ENCODE measurements at regions of chr5 and their contacts with region 1.

Region 1: DNA sequence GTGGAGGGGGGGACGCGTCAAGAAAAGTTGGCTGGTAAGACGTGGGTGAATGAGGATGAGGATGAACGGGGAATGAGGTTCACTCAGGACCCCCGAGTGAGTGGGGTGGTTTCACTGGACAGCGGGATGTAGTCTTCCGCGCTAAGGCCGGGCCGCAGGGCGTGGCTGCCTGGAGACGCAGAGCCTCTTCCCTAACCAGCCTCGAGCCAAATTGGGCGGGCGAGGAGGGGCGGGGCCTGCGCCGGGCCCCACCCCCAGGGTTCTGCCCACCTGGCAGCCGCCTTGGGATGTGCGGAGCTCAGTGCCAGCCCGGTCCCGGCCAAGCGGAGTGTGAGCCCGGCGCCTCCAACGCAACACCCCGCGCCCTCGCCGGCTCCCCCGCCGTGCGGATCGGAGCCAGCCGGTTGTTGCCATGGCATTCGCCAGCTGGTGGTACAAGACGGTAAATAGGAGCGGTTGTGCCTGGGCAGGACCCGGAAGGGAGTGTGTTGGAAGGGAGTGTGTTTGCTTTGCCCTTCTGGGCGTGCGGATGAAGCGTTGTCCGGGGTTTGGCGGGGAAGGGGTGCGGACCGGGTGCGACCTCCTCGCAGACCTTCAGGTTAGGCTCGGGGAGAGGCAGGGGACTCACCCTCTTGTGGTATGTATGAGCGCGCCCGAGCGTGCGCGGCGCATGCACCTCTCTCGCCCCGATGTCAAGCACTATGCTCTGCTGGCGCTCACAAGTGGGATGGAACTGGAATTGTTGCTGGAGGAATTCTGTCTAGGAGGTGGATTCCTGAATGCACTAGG is 743 bp downstream of the CAST start:
- DNase-seq: peak; percentile 85 to 97
- H3K4me3 ChIP-seq: peak overlapping the region; percentile 81 to 87
- H3K27ac ChIP-seq: peak overlapping the region; percentile 95
- H3K4me1 ChIP-seq: peaks cover 0 to 13% of the 10 kb centered on the region in 2 donors
- H3K27me3 ChIP-seq: no peaks in the 10 kb centered on the region
- CTCF ChIP-seq: peak in 1 of 3 experiments; percentile 9

Region 2: DNA sequence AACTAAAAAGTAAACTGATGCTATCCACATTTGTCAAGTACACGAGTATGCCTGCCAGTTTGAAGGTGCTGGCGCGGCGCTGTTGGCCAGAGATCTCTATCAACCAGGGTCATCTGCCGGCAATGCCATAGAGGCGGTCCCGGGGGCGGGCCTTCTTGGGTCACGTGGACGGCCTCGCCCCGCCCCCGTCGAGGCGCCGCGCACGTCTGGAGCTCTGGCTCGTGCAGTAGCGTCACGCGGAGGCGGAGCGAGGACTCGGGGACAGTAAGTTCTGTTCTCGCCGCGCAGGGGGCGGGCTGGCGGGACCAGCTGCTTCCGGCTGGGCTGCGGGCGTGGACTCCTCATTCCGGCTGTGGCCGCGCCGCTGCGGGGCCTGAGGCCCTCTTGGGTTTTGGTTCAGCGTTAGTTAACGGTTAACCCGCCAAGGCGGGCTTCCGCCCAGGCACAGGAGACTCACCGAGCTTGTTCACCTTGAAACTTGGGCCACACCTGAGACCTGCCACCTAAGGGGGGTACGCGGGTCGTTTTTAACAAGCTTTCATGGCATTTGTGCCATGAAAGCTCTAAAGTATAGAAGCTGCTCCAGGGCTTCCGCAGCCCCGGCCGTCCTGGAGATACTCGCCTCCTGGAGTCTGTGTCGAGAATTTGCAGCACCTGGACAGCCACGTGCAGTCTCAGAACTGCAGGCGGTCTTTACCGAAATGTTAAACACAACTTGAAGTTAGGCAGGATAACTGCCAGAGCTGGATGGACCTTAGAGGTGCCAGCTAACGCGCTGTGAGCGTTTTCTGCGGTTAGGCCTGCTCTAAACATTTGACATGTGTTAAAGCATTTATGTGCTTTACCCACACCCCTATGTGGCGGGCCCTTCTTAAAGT is 1016.1 kb before region 1 on chr5 and contains the start of gene RFESD:
- intact Hi-C with region 1: loop called (anchors 5 kb)
- DNase-seq: peak; percentile 97 to 100
- H3K4me3 ChIP-seq: peak within 1 kb of the TSS; percentile 59 to 77
- H3K27ac ChIP-seq: peak within 1 kb of the TSS; percentile 83 to 91
- H3K4me1 ChIP-seq: peaks cover 0 to 4% of the 10 kb centered on the region in 2 donors
- H3K27me3 ChIP-seq: no peaks in the 10 kb centered on the region
- CTCF ChIP-seq: peak in 1 of 3 experiments; percentile 22
- total RNA-seq, gene RFESD: not detected

Region 3: DNA sequence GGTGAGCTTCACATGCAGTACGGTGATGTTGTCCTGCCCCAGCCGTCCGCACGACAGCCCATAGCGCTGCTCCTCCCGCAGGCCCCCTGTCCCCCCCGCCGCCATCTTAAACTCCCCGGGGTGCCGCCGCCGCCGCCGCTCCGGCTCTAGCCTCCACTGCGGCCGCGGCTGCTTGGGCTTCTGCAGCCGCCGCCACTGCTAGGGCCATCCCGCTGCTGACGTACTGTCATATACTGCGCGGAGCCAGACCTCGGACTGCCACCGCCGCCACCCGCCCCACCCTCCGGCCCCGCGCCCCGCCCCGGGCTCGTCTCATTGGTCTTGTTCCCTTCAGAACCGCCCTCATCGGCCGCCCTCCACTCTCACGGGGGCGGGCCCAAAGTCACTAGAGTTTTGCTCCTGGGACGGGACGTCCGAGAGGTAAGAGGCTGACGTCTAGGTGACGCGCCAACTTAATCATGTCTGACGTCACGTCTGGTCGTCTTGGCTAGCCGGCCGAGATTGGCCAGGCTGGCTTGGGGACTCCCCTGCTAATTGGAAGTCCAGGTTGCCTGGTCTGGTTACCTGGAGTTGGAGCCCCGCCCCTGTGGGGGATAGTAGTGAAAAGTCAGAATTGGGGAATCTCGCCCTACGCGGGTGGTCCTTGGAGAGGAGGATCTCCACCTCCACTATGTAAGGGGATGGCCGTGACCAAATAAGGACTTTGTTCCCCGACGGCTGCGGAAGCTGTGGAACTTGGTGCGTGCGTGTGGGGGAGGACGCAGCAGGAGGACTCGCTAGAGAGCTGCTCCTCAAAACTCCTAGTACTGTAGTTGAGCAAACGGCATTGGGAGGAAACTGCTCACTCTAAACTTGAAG is 701.1 kb before region 1 on chr5 and contains the start of gene ELL2:
- intact Hi-C with region 1: loop called (anchors 5 kb)
- DNase-seq: peak; percentile 100
- H3K4me3 ChIP-seq: peak within 1 kb of the TSS; percentile 92 to 98
- H3K27ac ChIP-seq: peak within 1 kb of the TSS; percentile 99
- H3K4me1 ChIP-seq: peaks cover 0 to 14% of the 10 kb centered on the region in 2 donors
- H3K27me3 ChIP-seq: no peaks in the 10 kb centered on the region
- CTCF ChIP-seq: no peak
- total RNA-seq, gene ELL2: 26.0 TPM

Region 4: GRCh38 chr5:96614110-96614691 is 48.7 kb before region 1 on chr5:
- intact Hi-C with region 1: loop called (anchors 1 kb)
- DNase-seq: peak in 1 of 2 donors; percentile 77
- H3K4me3 ChIP-seq: peak overlapping the region in 1 of 2 donors; percentile 28
- H3K27ac ChIP-seq: peak overlapping the region; percentile 76 to 80
- H3K4me1 ChIP-seq: peaks cover 8 to 15% of the 10 kb centered on the region in 2 donors
- H3K27me3 ChIP-seq: no peaks in the 10 kb centered on the region
- CTCF ChIP-seq: peak; percentile 40 to 59 (median 52)

Region 5: GRCh38 chr5:96807075-96807654 is 144.2 kb after region 1 on chr5:
- intact Hi-C with region 1: loop called (anchors 2 kb)
- DNase-seq: peak in 1 of 2 donors; percentile 84
- H3K4me3 ChIP-seq: peak overlapping the region; percentile 95 to 99
- H3K27ac ChIP-seq: peak overlapping the region; percentile 100
- H3K4me1 ChIP-seq: peaks cover 0 to 4% of the 10 kb centered on the region in 2 donors
- H3K27me3 ChIP-seq: no peaks in the 10 kb centered on the region
- CTCF ChIP-seq: no peak

Region 6: DNA sequence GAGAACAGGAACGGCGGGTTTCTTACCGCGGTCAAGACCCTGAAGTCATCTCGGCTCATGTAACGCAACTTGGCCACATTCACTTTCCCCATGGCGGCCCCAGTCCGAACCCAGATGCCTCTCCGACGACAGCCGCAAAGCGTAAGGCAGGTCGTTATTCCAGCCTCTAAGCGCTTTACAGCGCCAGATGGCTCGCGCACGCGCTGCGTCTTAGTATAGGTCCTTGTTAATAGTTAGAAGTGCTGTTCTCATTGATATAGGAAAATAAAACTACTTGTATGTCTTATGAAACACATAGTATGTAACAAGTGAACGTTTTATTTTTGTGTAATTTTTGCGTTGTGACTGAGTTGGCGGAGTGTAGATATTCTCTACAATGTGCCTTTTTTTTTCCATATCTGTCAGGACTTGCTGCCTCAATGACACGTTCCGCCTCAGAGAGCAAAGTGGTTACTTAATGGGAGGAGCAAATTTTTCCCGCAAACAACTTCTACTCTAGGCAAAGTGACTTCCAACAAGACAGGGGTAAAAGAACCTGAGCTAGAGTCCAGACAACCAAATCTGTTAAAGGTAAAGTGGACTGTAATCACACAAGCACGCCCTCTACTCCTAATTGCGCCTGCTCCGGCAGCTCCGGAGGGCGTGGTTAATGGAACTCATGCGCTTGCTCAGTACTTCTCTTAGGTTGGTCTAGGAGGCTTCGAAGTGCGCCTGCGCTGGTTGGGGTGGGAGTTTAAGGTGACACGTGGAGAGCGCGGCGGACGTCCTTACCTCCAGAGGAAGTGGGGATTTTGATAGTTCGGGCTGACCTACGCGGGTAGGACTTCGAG is 520.4 kb after region 1 on chr5 and contains the start of gene RIOK2:
- intact Hi-C with region 1: loop called (anchors 2 kb)
- DNase-seq: peak; percentile 74 to 96
- H3K4me3 ChIP-seq: peak within 1 kb of the TSS; percentile 69 to 79
- H3K27ac ChIP-seq: peak within 1 kb of the TSS; percentile 73 to 93
- H3K4me1 ChIP-seq: peaks cover 0 to 14% of the 10 kb centered on the region in 2 donors
- H3K27me3 ChIP-seq: no peaks in the 10 kb centered on the region
- CTCF ChIP-seq: no peak
- total RNA-seq, gene RIOK2: 3.7 TPM